ENCODE measurements at regions of chr6 and their contacts with region 1.

Region 1: GRCh38 chr6:145372671-145373151 is 362.6 kb downstream of the EPM2A start:
- DNase-seq: peak; percentile 19
- H3K4me3 ChIP-seq: no peak overlapping the region
- H3K27ac ChIP-seq: no peak overlapping the region
- H3K4me1 ChIP-seq: no peaks in the 10 kb centered on the region
- H3K27me3 ChIP-seq: no peaks in the 10 kb centered on the region
- CTCF ChIP-seq: no peak

Region 2: DNA sequence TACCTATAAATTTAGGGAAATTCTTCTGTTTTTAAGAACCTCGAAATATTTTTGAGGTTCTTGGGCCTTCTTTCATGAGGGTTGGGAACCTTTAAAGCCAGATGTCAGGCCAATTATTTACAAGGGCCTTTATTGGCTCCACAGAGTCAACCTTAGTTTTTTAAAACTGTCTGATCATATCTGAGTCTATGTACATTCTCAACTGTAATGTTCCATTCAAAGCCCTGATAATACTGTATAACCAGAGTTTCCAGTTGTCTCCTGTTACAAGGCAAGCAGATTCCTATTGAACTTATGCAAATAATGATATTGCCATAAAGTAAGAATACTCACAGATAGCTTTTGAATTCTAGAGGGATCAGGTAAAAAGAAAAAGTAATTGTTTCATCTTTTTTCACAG is 182.9 kb before region 1 on chr6:
- CTCF ChIA-PET with region 1: no interaction called
- dilution Hi-C with region 1: no loop called
- in situ Hi-C with region 1: no loop called
- intact Hi-C with region 1: no loop called
- DNase-seq: no peak
- H3K4me3 ChIP-seq: no peak overlapping the region
- H3K27ac ChIP-seq: no peak overlapping the region
- H3K4me1 ChIP-seq: no peaks in the 10 kb centered on the region
- H3K27me3 ChIP-seq: no peaks in the 10 kb centered on the region
- CTCF ChIP-seq: no peak

Region 3: GRCh38 chr6:145415616-145416015 is 42.9 kb after region 1 on chr6:
- CTCF ChIA-PET with region 1: no interaction called
- dilution Hi-C with region 1: no loop called
- in situ Hi-C with region 1: no loop called
- intact Hi-C with region 1: no loop called
- DNase-seq: no peak
- H3K4me3 ChIP-seq: no peak overlapping the region
- H3K27ac ChIP-seq: no peak overlapping the region
- H3K4me1 ChIP-seq: no peaks in the 10 kb centered on the region
- H3K27me3 ChIP-seq: peaks cover 2% of the 10 kb centered on the region
- CTCF ChIP-seq: no peak

Region 4: GRCh38 chr6:145704143-145704781 is 331.6 kb after region 1 on chr6:
- CTCF ChIA-PET with region 1: no interaction called
- dilution Hi-C with region 1: no loop called
- in situ Hi-C with region 1: no loop called
- intact Hi-C with region 1: loop called (anchors 10 kb)
- DNase-seq: no peak
- H3K4me3 ChIP-seq: no peak overlapping the region
- H3K27ac ChIP-seq: no peak overlapping the region
- H3K4me1 ChIP-seq: peaks cover 16% of the 10 kb centered on the region
- H3K27me3 ChIP-seq: no peaks in the 10 kb centered on the region
- CTCF ChIP-seq: peak; percentile 20 to 47

Measured in mammary epithelial cell (primary cell).